ENCODE measurements at regions of chr20 and their contacts with region 1.

Region 1: DNA sequence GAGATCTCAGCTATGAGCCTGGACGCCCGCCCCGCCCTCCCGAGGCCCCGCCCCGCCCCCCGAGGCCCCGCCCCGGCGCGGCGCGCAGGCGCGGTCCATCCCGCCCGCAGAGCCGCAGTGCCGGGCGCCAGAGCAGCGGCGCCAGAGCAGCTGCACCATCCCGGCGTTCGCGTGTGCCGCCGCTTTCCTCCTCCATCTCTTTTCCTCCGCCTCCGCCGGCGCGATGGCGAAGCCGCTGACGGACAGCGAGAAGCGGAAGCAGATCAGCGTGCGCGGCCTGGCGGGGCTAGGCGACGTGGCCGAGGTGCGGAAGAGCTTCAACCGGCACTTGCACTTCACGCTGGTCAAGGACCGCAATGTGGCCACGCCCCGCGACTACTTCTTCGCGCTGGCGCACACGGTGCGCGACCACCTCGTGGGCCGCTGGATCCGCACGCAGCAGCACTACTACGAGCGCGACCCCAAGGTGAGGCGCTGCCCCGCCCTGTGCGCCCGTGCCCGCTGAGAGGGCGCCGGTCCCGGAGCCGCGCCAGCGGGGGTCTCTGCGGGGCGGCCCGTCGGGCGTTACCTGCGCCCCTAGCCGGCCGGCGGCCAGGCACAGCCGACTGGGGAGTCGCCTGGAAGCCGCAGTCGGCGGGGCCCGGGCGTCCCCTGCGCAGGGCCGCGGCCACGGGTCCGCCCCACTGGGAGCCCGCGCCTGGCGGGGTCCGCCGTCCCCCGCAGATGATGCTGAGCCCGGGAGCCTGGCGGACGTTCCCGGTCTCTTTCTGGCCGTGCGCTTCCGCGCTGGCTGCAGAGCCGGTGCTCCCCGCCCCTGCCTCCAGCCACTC is at the start of gene PYGB:
- DNase-seq: peak; percentile 89
- H3K4me3 ChIP-seq: peak within 1 kb of the TSS; percentile 91 to 98 (median 97)
- H3K27ac ChIP-seq: peak within 1 kb of the TSS; percentile 79
- H3K4me1 ChIP-seq: peaks cover 42% of the 10 kb centered on the region
- H3K27me3 ChIP-seq: no peaks in the 10 kb centered on the region
- CTCF ChIP-seq: no peak
- total RNA-seq, gene PYGB: 475 to 1,432 TPM

Region 2: GRCh38 chr20:25076731-25077609 is 171.2 kb before region 1 on chr20:
- CTCF ChIA-PET with region 1: no interaction called
- dilution Hi-C with region 1: no loop called
- in situ Hi-C with region 1: no loop called
- intact Hi-C with region 1: loop called (anchors 5 kb)
- DNase-seq: peak; percentile 65
- H3K4me3 ChIP-seq: peak overlapping the region in 1 of 3 experiments; percentile 8
- H3K27ac ChIP-seq: no peak overlapping the region
- H3K4me1 ChIP-seq: peaks cover 25% of the 10 kb centered on the region
- H3K27me3 ChIP-seq: peaks cover 17% of the 10 kb centered on the region
- CTCF ChIP-seq: peak; percentile 30 to 58

Region 3: GRCh38 chr20:25136643-25137559 is 111.3 kb before region 1 on chr20:
- CTCF ChIA-PET with region 1: no interaction called
- dilution Hi-C with region 1: no loop called
- in situ Hi-C with region 1: no loop called
- intact Hi-C with region 1: loop called (anchors 1 kb)
- DNase-seq: peak; percentile 77
- H3K4me3 ChIP-seq: no peak overlapping the region
- H3K27ac ChIP-seq: no peak overlapping the region
- H3K4me1 ChIP-seq: peaks cover 15% of the 10 kb centered on the region
- H3K27me3 ChIP-seq: no peaks in the 10 kb centered on the region
- CTCF ChIP-seq: no peak

Region 4: GRCh38 chr20:25204550-25205276 is 43.5 kb before region 1 on chr20:
- CTCF ChIA-PET with region 1: no interaction called
- dilution Hi-C with region 1: no loop called
- in situ Hi-C with region 1: loop called (anchors 5 kb)
- intact Hi-C with region 1: loop called (anchors 2 kb)
- DNase-seq: peak; percentile 36
- H3K4me3 ChIP-seq: no peak overlapping the region
- H3K27ac ChIP-seq: peak overlapping the region; percentile 36
- H3K4me1 ChIP-seq: peaks cover 28% of the 10 kb centered on the region
- H3K27me3 ChIP-seq: no peaks in the 10 kb centered on the region
- CTCF ChIP-seq: no peak

Region 5: GRCh38 chr20:25223179-25223661 is 25.0 kb before region 1 on chr20:
- CTCF ChIA-PET with region 1: interaction called, 11 read pairs
- dilution Hi-C with region 1: no loop called
- in situ Hi-C with region 1: no loop called
- intact Hi-C with region 1: loop called (anchors 1 kb)
- DNase-seq: peak; percentile 99
- H3K4me3 ChIP-seq: no peak overlapping the region
- H3K27ac ChIP-seq: peak overlapping the region; percentile 79
- H3K4me1 ChIP-seq: peaks cover 53% of the 10 kb centered on the region
- H3K27me3 ChIP-seq: no peaks in the 10 kb centered on the region
- CTCF ChIP-seq: peak in 1 of 2 donors; percentile 65

Region 6: DNA sequence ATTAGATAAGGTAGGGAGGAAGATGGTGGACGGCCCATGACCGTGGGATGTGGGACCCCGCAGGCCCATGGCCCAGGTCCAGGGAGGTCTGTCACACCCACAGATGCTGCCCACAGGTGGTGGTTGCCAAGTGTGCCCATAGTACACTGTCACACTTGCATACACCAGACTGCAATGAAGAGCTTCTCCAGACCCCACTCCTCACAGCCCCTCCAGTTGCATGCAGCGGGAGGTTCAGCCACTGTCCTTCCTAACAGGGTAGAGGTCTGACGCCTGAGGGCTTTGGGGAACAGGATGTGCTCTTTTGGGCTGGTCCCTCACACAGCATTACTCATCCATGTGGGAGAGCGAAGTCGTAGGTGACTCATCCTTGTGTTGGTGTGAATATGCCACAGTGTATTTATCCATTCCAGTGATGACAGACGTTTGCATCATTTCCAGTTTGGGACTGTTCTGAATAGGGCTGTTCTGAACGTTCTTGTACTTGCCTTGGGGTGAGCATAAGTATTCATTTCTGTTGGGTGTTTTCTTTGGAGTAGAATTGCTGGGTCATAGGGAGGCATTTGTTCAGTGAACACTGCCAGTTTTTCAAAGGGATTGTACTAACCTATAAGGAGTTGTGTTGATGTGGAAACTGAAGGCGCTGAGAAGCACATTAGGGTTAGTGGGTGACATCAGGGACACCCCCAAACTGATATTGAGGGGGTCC is 10.4 kb before region 1 on chr20:
- CTCF ChIA-PET with region 1: interaction called, 4 read pairs
- dilution Hi-C with region 1: no loop called
- in situ Hi-C with region 1: no loop called
- intact Hi-C with region 1: loop called (anchors 1 kb)
- DNase-seq: peak; percentile 100
- H3K4me3 ChIP-seq: no peak overlapping the region
- H3K27ac ChIP-seq: peak overlapping the region; percentile 98
- H3K4me1 ChIP-seq: peaks cover 84% of the 10 kb centered on the region
- H3K27me3 ChIP-seq: no peaks in the 10 kb centered on the region
- CTCF ChIP-seq: no peak

Measured in mammary epithelial cell (primary cell).